ENCODE measurements at regions of chr4 and their contacts with region 1.

Region 1: GRCh38 chr4:1289207-1290164 is at the start of gene MAEA:
- DNase-seq: peak; percentile 98
- H3K4me3 ChIP-seq: peak within 1 kb of the TSS; percentile 97
- H3K27ac ChIP-seq: peak within 1 kb of the TSS; percentile 81
- H3K4me1 ChIP-seq: peaks cover 9% of the 10 kb centered on the region
- H3K27me3 ChIP-seq: no peaks in the 10 kb centered on the region
- CTCF ChIP-seq: no peak
- total RNA-seq, gene MAEA: 85.9 and 87.0 TPM in 2 replicates

Region 2: DNA sequence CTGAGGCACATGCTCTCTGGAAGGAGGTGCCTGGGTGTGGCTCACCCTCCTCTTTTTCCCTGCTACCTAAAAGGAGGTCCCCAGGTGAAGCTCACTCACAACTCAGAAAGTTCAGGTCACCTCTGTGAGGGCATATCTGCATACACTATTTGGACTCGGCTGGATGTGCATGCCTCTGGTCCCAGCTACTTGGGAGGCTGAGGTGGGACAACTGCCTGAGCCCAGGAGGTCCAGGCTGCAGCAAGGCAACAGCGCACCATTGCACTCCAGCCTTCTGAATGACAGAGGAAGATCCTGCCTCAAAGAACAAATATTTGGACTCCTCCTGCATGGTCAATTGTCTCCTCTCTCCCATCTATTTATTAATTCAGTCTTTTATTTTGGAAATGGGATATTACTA is 509.9 kb before region 1 on chr4:
- CTCF ChIA-PET with region 1: no interaction called
- POLR2A ChIA-PET with region 1: interaction called, 14 read pairs
- intact Hi-C with region 1: no loop called
- DNase-seq: no peak
- H3K4me3 ChIP-seq: peak overlapping the region; percentile 98
- H3K27ac ChIP-seq: no peak overlapping the region
- H3K4me1 ChIP-seq: peaks cover 13% of the 10 kb centered on the region
- H3K27me3 ChIP-seq: no peaks in the 10 kb centered on the region
- CTCF ChIP-seq: no peak

Region 3: DNA sequence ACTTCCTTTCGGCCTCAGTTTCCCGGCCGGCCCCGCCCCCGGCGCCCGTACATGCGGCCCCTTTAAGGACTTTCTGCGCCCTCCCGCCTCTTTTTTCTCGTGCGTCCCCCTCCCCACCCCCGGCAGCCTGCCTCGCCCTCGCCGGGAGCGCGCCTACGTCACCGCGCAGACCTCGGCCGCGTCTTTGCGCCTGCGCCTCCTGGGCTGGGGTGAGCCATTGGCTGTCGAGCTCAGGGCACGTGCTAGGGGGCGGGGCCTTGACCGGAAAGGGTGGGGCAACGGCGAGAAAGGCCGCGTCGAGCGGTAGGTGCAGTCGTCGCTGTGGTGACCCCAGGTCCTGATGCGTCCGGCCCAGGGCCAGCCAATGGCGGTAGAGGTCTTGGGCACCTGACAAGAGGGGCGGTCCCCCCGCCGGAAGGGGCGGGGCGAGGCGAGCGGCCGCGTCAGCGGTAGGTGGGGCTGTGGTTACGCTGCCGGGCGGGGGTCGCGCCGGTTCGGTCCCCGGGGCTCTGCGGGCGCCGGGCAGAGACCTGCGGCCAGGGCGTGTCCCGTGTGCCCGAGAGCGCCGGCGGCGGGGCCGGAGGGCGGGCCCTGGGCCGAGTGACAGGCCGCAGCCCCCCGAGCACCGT is 57.4 kb after region 1 on chr4 and contains the start of gene UVSSA:
- CTCF ChIA-PET with region 1: no interaction called
- POLR2A ChIA-PET with region 1: no interaction called
- intact Hi-C with region 1: loop called (anchors 5 kb)
- DNase-seq: peak; percentile 99
- H3K4me3 ChIP-seq: peak within 1 kb of the TSS; percentile 81
- H3K27ac ChIP-seq: peak within 1 kb of the TSS; percentile 93
- H3K4me1 ChIP-seq: no peaks in the 10 kb centered on the region
- H3K27me3 ChIP-seq: no peaks in the 10 kb centered on the region
- CTCF ChIP-seq: no peak
- total RNA-seq, gene UVSSA: 20.3 and 27.8 TPM in 2 replicates

Region 4: DNA sequence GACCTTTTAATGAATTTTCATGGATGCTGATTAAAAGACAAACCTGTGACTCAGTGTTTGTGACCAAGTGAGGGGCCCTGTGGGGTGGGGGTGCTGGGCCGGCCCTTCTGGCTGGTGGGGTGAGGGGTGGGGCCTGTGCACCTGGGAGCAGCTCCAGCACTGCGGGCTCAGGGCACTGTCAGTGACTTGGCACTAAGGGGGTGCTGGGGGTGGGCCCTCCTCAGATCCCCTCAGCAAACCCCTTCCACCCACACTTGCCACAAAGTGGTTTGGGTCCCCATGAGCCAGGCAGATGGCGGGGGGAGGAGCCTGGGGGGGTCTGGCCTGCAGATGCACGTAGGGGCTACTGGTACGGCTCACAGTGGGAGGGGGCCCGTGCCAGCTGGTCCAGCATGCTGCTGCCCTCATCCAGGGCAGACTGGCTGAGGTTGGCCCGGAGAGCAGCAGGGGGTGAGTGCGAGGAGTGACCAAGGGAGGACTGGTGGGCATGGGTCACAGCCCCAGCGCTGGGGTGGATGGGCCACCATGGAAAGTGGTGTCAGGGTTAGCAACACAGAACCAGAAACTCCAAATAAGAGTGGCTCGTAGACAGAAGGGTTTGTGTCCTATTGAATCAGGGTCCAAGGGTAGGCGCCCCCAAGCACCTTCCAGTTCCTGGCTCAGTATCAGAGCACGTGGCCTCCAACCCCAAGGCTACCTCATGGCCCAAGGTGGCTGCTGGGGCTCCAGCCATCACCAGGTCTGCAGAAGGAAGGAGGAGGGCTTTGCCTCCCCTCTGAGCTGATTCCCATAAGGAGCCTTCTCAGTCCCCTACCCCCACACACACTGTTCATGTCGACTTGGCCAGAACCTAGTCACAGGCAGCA is 106.7 kb after region 1 on chr4:
- CTCF ChIA-PET with region 1: no interaction called
- POLR2A ChIA-PET with region 1: interaction called, 10 read pairs
- intact Hi-C with region 1: no loop called
- DNase-seq: no peak
- H3K4me3 ChIP-seq: no peak overlapping the region
- H3K27ac ChIP-seq: no peak overlapping the region
- H3K4me1 ChIP-seq: no peaks in the 10 kb centered on the region
- H3K27me3 ChIP-seq: peaks cover 10% of the 10 kb centered on the region
- CTCF ChIP-seq: no peak

Region 5: GRCh38 chr4:1693129-1693896 is 403.8 kb after region 1 on chr4:
- CTCF ChIA-PET with region 1: interaction called, 11 read pairs
- POLR2A ChIA-PET with region 1: no interaction called
- intact Hi-C with region 1: no loop called
- DNase-seq: peak; percentile 86
- H3K4me3 ChIP-seq: no peak overlapping the region
- H3K27ac ChIP-seq: no peak overlapping the region
- H3K4me1 ChIP-seq: no peaks in the 10 kb centered on the region
- H3K27me3 ChIP-seq: no peaks in the 10 kb centered on the region
- CTCF ChIP-seq: peak; percentile 97